ENCODE measurements at regions of chr14 and their contacts with region 1.

Region 1: GRCh38 chr14:77301103-77301502 is 19.6 kb downstream of the POMT2 start:
- DNase-seq: peak; percentile 74
- H3K4me3 ChIP-seq: no peak overlapping the region
- H3K27ac ChIP-seq: no peak overlapping the region
- H3K4me1 ChIP-seq: peaks cover 29% of the 10 kb centered on the region
- H3K27me3 ChIP-seq: no peaks in the 10 kb centered on the region
- CTCF ChIP-seq: peak; percentile 85
- POLR2A ChIP-seq: no peak

Region 2: GRCh38 chr14:77376771-77377501 is 75.8 kb after region 1 on chr14 and contains the starts of genes SAMD15 and TMED8:
- CTCF ChIA-PET with region 1: interaction called, 7 read pairs
- POLR2A ChIA-PET with region 1: no interaction called
- dilution Hi-C with region 1: no loop called
- intact Hi-C with region 1: loop called (anchors 1 kb)
- DNase-seq: peak; percentile 95
- H3K4me3 ChIP-seq: peak within 1 kb of the TSS; percentile 58 to 76 (median 69)
- H3K27ac ChIP-seq: peak within 1 kb of the TSS; percentile 71
- H3K4me1 ChIP-seq: peaks cover 15% of the 10 kb centered on the region
- H3K27me3 ChIP-seq: no peaks in the 10 kb centered on the region
- CTCF ChIP-seq: peak in 1 of 2 donors; percentile 30
- POLR2A ChIP-seq: peak; percentile 58
- total RNA-seq, gene SAMD15: 0.65 and 1.1 TPM in 2 replicates
- total RNA-seq, gene TMED8: 12.6 and 13.5 TPM in 2 replicates

Region 3: DNA sequence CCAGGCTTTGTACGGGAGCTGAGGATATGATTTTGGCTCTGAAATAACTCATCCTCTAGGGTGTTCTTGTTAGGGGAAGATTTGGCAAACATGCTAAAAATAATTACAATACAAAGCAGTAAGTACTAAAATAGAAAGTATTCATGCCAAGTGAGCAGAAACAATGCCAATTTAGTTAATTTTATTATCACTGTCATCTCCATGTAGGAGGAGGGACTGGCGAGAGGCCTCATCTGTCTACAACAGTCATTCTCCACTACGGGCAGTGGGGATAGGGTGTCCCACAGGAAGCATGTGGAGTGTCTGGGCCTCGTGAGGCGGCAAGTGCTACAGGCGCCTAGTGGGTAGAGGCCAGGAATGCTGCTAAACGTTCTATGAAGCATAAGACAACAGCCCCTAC is 194.2 kb after region 1 on chr14:
- CTCF ChIA-PET with region 1: no interaction called
- POLR2A ChIA-PET with region 1: no interaction called
- dilution Hi-C with region 1: no loop called
- intact Hi-C with region 1: no loop called
- DNase-seq: no peak
- H3K4me3 ChIP-seq: no peak overlapping the region
- H3K27ac ChIP-seq: no peak overlapping the region
- H3K4me1 ChIP-seq: peaks cover 7% of the 10 kb centered on the region
- H3K27me3 ChIP-seq: peaks cover 17 to 27% of the 10 kb centered on the region in 2 experiments
- CTCF ChIP-seq: no peak
- POLR2A ChIP-seq: no peak

Measured in endothelial cell of umbilical vein (primary cell).